Sciatic nerve (tissue), 2 donors: ENCODE measurements at regions of chr10 and their contacts with region 1.

Region 1: GRCh38 chr10:62816331-62817120 is at the start of gene EGR2:
- DNase-seq: peak; percentile 96
- ATAC-seq: peak; percentile 91
- total RNA-seq, gene EGR2: 53.1 TPM

Region 2: GRCh38 chr10:62076891-62077290 is 739.6 kb before region 1 on chr10:
- intact Hi-C with region 1: no loop called
- DNase-seq: no peak
- ATAC-seq: peak; percentile 34

Region 3: DNA sequence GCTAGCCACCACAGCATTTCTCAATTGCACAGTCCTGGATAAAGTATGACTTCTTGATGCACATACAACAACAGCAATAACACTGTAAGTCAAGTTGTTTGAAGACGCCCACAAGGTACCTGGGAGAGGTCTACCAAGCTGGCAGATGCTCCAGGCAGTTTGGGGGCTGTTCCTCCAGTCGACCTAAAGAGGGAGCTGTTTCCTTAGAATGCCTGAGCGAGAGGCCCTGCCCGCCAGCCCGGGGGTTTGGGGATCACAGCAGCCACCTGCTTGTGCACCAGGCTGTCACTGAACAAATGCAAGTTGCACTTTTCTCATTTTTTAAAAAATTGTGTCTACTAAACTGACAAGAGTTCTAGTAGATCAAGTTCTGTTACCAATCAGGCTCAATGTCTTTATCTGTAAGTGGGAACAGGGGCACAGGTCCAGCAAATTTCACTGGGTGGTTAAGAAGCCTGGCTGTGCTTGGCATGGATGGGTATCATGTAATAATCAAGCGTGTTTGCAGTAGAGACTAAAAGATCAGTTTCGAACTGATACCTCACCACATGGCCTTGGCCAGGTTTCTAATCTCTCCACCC is 205.8 kb before region 1 on chr10:
- intact Hi-C with region 1: loop called (anchors 5 kb)
- DNase-seq: peak; percentile 69
- ATAC-seq: peak; percentile 56